A549 (cell line): ENCODE measurements at regions of chr17 and their contacts with region 1.

Region 1: GRCh38 chr17:18033442-18034099 is 5.4 kb downstream of the ATPAF2 start:
- DNase-seq: peak; percentile 86 to 89
- ATAC-seq: peak; percentile 96 to 97
- H3K4me3 ChIP-seq: no peak overlapping the region
- H3K27ac ChIP-seq: peak overlapping the region in 1 of 2 experiments; percentile 27; a peak in 1 of 6 replicates
- H3K4me1 ChIP-seq: peaks cover 10% of the 10 kb centered on the region; the same call in 2 of the 3 replicates
- CTCF ChIP-seq: peak; percentile 93
- EP300 ChIP-seq: no peak
- POLR2A ChIP-seq: no peak
- RAD21 ChIP-seq: peak; percentile 96 to 98

Region 2: DNA sequence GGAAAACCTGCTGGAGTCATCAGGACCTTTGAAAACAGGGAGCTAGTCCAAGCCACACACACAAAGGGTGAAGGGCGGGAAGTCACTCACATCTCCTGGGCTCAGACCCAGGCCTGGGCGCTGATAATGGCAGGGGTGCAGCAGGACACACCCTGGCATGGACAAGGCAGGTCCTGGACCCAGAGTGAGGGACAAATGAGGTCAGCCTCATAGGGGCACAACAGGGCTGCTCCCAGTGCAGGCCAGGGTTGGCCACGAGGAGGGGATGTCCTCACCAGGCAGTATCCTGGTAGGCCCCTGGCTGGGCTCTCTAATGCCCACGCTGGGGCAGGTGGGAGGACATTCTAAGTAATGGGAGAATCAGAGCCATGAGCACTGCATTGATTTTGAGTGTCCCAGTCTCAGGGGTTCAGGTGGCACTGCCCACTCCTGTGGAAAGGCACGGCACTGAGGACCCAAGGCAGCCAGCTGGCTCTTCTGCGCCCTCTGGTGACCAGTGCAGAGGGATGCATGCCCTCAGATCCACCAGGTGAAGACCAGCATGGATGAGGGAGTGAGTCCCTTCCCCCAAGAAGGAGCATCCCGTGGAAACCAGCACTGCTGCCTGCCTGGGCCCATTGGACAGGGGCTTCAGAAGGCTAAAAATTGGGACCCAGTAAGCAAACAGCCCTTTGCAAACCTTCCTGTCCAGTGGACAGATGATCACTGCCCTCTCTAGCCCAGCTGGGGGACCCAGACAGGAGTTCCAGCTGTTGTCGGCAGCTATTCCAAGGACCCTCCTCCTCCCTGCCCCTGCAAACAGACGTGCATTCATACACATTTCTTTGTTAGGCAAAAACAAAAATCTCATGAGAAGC is 173.4 kb before region 1 on chr17:
- CTCF ChIA-PET with region 1: interaction called, 17 read pairs
- POLR2A ChIA-PET with region 1: interaction called, 10 read pairs
- DNase-seq: peak; percentile 72 to 97
- ATAC-seq: peak; percentile 94 to 97
- H3K4me3 ChIP-seq: no peak overlapping the region
- H3K27ac ChIP-seq: peak overlapping the region; percentile 15 to 61; a peak in 4 of 6 replicates
- H3K4me1 ChIP-seq: peaks cover 8% of the 10 kb centered on the region; the same call in 2 of the 3 replicates
- CTCF ChIP-seq: peak; percentile 99
- EP300 ChIP-seq: no peak
- POLR2A ChIP-seq: no peak
- RAD21 ChIP-seq: peak; percentile 98 to 99

Region 3: GRCh38 chr17:17877529-17878358 is 155.8 kb before region 1 on chr17:
- CTCF ChIA-PET with region 1: interaction called, 13 read pairs
- POLR2A ChIA-PET with region 1: no interaction called
- DNase-seq: no peak
- ATAC-seq: no peak
- H3K4me3 ChIP-seq: no peak overlapping the region
- H3K27ac ChIP-seq: no peak overlapping the region
- H3K4me1 ChIP-seq: peaks cover 5% of the 10 kb centered on the region; the same call in 1 of the 3 replicates
- CTCF ChIP-seq: no peak
- EP300 ChIP-seq: no peak
- POLR2A ChIP-seq: no peak
- RAD21 ChIP-seq: no peak

Region 4: GRCh38 chr17:17928398-17929287 is 104.9 kb before region 1 on chr17:
- CTCF ChIA-PET with region 1: interaction called, 18 read pairs
- POLR2A ChIA-PET with region 1: no interaction called
- DNase-seq: no peak
- ATAC-seq: peak in 1 of 2 experiments; percentile 31; a peak in 1 of 6 replicates
- H3K4me3 ChIP-seq: no peak overlapping the region
- H3K27ac ChIP-seq: no peak overlapping the region
- H3K4me1 ChIP-seq: peaks cover 11% of the 10 kb centered on the region; the same call in 2 of the 3 replicates
- CTCF ChIP-seq: no peak
- EP300 ChIP-seq: no peak
- POLR2A ChIP-seq: no peak
- RAD21 ChIP-seq: no peak

Region 5: DNA sequence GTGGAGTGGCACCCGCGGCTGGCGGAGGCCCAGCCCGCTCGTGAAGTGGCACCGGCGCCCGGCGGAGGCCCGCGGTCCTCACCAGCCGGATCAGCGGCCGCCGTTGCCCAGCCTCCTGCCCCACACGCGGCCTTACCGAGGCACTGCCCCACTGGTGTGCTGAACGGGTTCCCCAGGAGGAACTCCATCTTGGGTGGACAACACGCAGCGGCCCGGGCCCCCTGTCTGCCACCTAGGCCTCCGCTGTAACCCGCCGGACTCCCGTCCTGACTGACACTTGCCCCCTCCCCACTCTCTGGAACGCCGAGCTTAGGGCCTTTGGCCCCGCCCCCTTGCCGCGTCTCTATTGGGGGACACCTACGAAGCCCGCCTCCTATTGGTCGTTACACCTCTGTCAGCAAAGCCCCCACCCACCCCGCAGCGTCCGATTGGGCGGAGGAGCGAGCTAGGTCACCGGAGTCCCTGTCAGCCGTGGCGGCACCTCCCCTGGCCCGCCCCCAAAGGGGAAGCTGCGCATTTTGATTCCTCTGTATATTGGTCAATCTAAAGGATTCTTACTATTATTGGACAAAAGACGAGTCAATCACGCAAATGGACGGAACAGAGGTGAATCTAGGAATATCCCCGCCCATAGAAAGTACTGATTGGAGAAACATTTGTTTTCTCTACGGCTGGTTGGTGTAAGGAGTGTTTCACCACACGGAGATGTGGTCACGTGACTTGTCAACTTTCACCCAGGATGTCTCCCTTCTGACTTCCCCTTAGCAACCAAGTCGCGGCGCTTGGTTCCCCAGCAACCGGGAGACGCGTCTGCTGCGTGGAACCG is 61.2 kb before region 1 on chr17 and contains the starts of genes DRC3 and TOM1L2:
- CTCF ChIA-PET with region 1: interaction called, 17 read pairs
- POLR2A ChIA-PET with region 1: no interaction called
- DNase-seq: peak; percentile 100
- ATAC-seq: peak; percentile 93 to 96
- H3K4me3 ChIP-seq: peak within 1 kb of the TSS; percentile 69
- H3K27ac ChIP-seq: peak within 1 kb of the TSS; percentile 68 to 88
- H3K4me1 ChIP-seq: peaks cover 25% of the 10 kb centered on the region
- CTCF ChIP-seq: no peak
- EP300 ChIP-seq: no peak
- POLR2A ChIP-seq: peak; percentile 57
- RAD21 ChIP-seq: no peak
- polyA plus RNA-seq, gene DRC3: 2.9 and 3.1 TPM in 2 replicates
- polyA plus RNA-seq, gene TOM1L2: 19.0 and 19.2 TPM in 2 replicates

Region 6: GRCh38 chr17:17994271-17995069 is 39.1 kb before region 1 on chr17:
- CTCF ChIA-PET with region 1: interaction called, 29 read pairs
- POLR2A ChIA-PET with region 1: no interaction called
- DNase-seq: peak; percentile 62 to 74
- ATAC-seq: peak; percentile 73 to 82
- H3K4me3 ChIP-seq: no peak overlapping the region
- H3K27ac ChIP-seq: peak overlapping the region in 1 of 2 experiments; percentile 84; a peak in 2 of 6 replicates
- H3K4me1 ChIP-seq: peaks cover 38% of the 10 kb centered on the region
- CTCF ChIP-seq: peak; percentile 52
- EP300 ChIP-seq: no peak
- POLR2A ChIP-seq: no peak
- RAD21 ChIP-seq: peak; percentile 38 to 48; a peak in 3 of 5 replicates

Region 7: GRCh38 chr17:18017958-18018357 is 15.6 kb before region 1 on chr17:
- CTCF ChIA-PET with region 1: interaction called, 26 read pairs
- POLR2A ChIA-PET with region 1: interaction called, 6 read pairs
- DNase-seq: no peak
- ATAC-seq: no peak
- H3K4me3 ChIP-seq: no peak overlapping the region
- H3K27ac ChIP-seq: no peak overlapping the region
- H3K4me1 ChIP-seq: no peaks in the 10 kb centered on the region
- CTCF ChIP-seq: no peak
- EP300 ChIP-seq: no peak
- POLR2A ChIP-seq: no peak
- RAD21 ChIP-seq: no peak

Region 8: GRCh38 chr17:18093616-18094408 is 60.2 kb after region 1 on chr17:
- CTCF ChIA-PET with region 1: no interaction called
- POLR2A ChIA-PET with region 1: no interaction called
- DNase-seq: peak; percentile 63 to 77
- ATAC-seq: peak; percentile 67 to 82
- H3K4me3 ChIP-seq: no peak overlapping the region
- H3K27ac ChIP-seq: no peak overlapping the region
- H3K4me1 ChIP-seq: peaks cover 7% of the 10 kb centered on the region
- CTCF ChIP-seq: peak; percentile 55
- EP300 ChIP-seq: no peak
- POLR2A ChIP-seq: no peak
- RAD21 ChIP-seq: no peak

Region 9: GRCh38 chr17:18117982-18118975 is 84.7 kb after region 1 on chr17:
- CTCF ChIA-PET with region 1: no interaction called
- POLR2A ChIA-PET with region 1: no interaction called
- DNase-seq: no peak
- ATAC-seq: 0 out of 6 replicates have a peak, but pooled peaks of 1 of the 2 experiments have one; percentile 6
- H3K4me3 ChIP-seq: no peak overlapping the region
- H3K27ac ChIP-seq: no peak overlapping the region
- H3K4me1 ChIP-seq: no peaks in the 10 kb centered on the region
- CTCF ChIP-seq: no peak
- EP300 ChIP-seq: no peak
- POLR2A ChIP-seq: no peak
- RAD21 ChIP-seq: no peak